Posterior cingulate gyrus (tissue), 11 donors: ENCODE measurements at regions of chr7 and their contacts with region 1.

Region 1: GRCh38 chr7:30625283-30625682 is 30.6 kb downstream of the GARS1 start:
- DNase-seq: no peak

Region 2: GRCh38 chr7:30740424-30741181 is 115.3 kb after region 1 on chr7:
- intact Hi-C with region 1: loop called (anchors 10 kb)
- DNase-seq: peak; percentile 69 to 97 (median 84)